HepG2 (cell line): ENCODE measurements at regions of chr4 and their contacts with region 1.

Region 1: DNA sequence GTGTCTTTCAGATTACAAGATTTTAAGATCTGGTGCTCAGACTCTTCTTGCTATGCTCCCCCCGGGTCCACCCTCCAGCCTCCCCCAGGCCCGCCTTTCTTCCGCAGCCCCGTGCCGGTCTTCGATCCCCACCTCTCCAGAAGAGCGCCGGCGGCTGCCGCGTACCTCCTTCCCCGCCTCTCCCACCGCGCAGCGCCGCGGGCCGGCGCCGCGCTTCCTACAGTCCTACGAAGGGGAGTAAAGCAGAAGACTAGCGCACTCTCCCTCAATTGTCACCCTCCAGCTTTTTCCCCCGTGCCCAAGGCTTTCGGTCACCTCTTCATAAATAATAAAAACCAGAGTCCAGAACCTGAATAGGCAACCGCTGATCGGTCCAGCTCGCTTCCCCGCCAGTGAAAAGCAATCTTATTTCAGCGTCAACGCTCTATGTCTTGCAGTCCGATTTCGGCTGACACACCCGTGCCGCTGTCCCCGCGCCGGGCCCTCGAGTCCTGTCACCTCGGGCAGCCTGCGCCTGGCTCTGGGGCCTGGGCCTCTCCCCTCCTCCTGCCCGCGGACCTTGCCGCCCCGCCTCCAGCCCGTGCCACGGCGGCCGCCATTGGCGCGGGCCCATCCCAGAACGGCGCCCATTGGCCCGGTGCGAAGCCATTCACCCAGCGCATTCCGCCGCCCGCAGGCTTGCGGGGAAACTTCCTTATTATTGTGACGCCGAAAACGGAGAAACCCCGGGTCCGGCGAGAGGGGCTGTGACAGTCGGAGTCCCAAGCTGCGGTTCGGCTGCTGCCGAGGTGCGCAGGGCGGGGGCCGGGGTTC is at the start of gene HERC3:
- DNase-seq: peak; percentile 67
- ATAC-seq: peak; percentile 99
- H3K4me3 ChIP-seq: peak within 1 kb of the TSS; percentile 68 to 78 (median 75)
- H3K27ac ChIP-seq: peak within 1 kb of the TSS; percentile 44
- H3K4me1 ChIP-seq: peaks cover 20% of the 10 kb centered on the region
- H3K27me3 ChIP-seq: no peaks in the 10 kb centered on the region; a peak in 1 of 5 replicates
- CTCF ChIP-seq: no peak; the same call in 1 of the 2 replicates
- EP300 ChIP-seq: no peak
- POLR2A ChIP-seq: no peak
- RAD21 ChIP-seq: no peak
- total RNA-seq, gene HERC3: 3.8 and 6.7 TPM in 2 replicates

Region 2: GRCh38 chr4:88573995-88574394 is 18.0 kb before region 1 on chr4:
- CTCF ChIA-PET with region 1: no interaction called
- POLR2A ChIA-PET with region 1: no interaction called
- in situ Hi-C with region 1: no loop called
- intact Hi-C with region 1: loop called (anchors 1 kb)
- DNase-seq: peak; percentile 13
- ATAC-seq: peak; percentile 61
- H3K4me3 ChIP-seq: no peak overlapping the region
- H3K27ac ChIP-seq: no peak overlapping the region
- H3K4me1 ChIP-seq: no peaks in the 10 kb centered on the region
- H3K27me3 ChIP-seq: 0 out of 5 replicates have a peak, but pooled peaks cover 0 to 1% of the 10 kb centered on the region in 2 experiments
- CTCF ChIP-seq: no peak
- EP300 ChIP-seq: no peak
- POLR2A ChIP-seq: no peak
- RAD21 ChIP-seq: no peak

Region 3: DNA sequence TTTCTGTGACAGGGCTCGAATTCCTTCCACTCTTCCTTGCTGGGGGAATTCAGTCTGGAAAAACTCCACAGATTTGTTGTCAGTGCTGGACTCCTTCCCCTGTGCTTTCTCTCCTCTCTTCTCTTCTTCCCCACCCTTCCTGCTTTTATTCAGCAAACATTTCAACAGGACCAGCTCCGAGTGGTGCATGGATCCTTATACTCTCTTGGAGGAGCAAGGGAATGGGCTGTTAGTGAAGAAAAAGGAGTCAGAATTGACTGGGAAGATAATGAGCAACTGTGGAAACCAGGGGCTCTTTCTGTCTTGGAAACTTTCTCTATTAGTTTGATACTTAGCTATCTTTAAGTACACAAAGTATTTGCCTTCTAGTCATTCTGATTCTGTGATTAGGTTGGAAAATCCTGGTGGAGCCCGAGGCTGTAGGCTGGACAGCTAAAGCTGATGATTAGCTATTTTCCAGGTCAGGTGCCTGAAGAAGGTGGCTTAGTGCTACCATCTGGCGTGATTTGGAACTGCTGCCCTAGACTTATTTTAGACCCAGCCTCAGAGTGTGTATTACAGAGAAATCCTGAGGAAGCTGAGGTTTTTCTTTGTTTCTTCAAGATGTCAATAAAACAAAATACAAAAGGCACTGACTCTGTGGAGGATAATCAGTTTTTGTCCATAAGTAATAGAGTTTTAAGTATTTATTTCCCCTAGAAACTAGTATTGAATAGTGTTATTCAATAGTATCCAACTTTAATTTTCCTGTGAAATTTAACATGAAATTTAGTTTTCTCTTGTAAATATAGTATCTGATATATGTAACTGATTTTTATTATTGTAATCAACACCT is 67.3 kb after region 1 on chr4:
- CTCF ChIA-PET with region 1: no interaction called
- POLR2A ChIA-PET with region 1: interaction called, 3 read pairs
- in situ Hi-C with region 1: no loop called
- intact Hi-C with region 1: loop called (anchors 5 kb)
- DNase-seq: peak; percentile 52
- ATAC-seq: peak; percentile 99
- H3K4me3 ChIP-seq: no peak overlapping the region; a peak in 1 of 6 replicates
- H3K27ac ChIP-seq: peak overlapping the region; percentile 16
- H3K4me1 ChIP-seq: peaks cover 37% of the 10 kb centered on the region
- H3K27me3 ChIP-seq: no peaks in the 10 kb centered on the region
- CTCF ChIP-seq: peak; percentile 78
- EP300 ChIP-seq: no peak
- POLR2A ChIP-seq: no peak
- RAD21 ChIP-seq: peak; percentile 39; the same call in 1 of the 2 replicates